Dendritic cell treated with granulocyte-macrophage colony-stimulating factor and Interleukin-4, amounts not matched to agents 40 ng/mL and 50 ng/mL, for 4 days (primary cell): ENCODE measurements at regions of chr7 and their contacts with region 1.

Region 1: DNA sequence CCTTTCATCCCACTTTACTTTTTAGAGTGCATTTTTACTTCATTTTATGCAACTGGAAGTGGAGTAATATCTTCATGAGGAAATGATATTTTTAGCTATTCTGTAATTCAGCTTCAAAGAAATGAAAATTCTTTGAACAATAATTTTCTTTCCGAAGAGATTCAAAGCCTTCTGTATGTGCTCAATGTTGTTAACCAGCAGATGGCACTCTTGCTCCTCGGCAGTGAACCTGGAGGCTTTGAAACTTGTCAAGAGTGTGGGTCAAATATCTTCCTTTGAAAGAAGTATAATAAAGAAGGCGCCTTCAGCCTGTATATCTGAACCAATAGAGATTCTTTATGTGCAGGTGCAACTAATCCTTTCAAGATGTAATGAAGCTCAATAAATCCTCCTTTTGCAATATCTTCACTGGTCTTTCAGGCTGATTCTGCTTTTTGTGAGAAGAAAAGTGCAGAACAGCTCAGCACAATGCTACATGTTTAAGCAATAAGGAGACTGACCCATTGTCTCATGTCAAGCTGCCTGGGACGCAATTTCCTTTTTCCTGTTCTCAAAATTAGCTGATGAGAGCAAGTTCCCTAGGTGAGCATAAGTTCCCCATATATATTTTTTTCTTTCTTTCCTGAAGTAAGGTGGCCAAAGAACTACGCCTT is 258.4 kb downstream of the SEMA3A start:
- H3K4me3 Mint-ChIP-seq: no peak overlapping the region
- H3K27ac Mint-ChIP-seq: no peak overlapping the region
- H3K4me1 Mint-ChIP-seq: peaks cover 18% of the 10 kb centered on the region
- H3K27me3 Mint-ChIP-seq: no peaks in the 10 kb centered on the region

Region 2: GRCh38 chr7:83861876-83862275 is 74.3 kb before region 1 on chr7:
- intact Hi-C with region 1: no loop called
- H3K4me3 Mint-ChIP-seq: no peak overlapping the region
- H3K27ac Mint-ChIP-seq: no peak overlapping the region
- H3K4me1 Mint-ChIP-seq: no peaks in the 10 kb centered on the region
- H3K27me3 Mint-ChIP-seq: no peaks in the 10 kb centered on the region

Region 3: DNA sequence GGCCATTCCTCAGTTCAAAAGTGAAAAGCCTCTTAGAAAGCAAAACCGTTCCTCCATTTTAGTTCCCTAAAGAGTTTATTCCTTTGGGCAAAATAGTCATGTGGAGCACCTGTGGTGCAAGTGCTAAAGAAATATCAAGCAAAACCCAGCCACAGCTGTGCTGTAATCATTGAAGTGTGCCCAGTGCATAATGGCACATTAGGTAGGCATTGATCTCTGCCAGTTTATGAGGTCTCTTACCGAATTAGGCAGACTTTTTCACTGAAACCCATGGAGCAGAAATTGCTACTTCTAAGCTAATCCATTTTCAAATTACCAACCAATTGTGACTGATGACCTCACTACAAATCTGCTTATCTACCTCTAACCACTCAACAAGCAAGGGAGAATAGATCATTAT is 355.6 kb after region 1 on chr7:
- intact Hi-C with region 1: no loop called
- H3K4me3 Mint-ChIP-seq: no peak overlapping the region
- H3K27ac Mint-ChIP-seq: no peak overlapping the region
- H3K4me1 Mint-ChIP-seq: no peaks in the 10 kb centered on the region
- H3K27me3 Mint-ChIP-seq: no peaks in the 10 kb centered on the region

Region 4: DNA sequence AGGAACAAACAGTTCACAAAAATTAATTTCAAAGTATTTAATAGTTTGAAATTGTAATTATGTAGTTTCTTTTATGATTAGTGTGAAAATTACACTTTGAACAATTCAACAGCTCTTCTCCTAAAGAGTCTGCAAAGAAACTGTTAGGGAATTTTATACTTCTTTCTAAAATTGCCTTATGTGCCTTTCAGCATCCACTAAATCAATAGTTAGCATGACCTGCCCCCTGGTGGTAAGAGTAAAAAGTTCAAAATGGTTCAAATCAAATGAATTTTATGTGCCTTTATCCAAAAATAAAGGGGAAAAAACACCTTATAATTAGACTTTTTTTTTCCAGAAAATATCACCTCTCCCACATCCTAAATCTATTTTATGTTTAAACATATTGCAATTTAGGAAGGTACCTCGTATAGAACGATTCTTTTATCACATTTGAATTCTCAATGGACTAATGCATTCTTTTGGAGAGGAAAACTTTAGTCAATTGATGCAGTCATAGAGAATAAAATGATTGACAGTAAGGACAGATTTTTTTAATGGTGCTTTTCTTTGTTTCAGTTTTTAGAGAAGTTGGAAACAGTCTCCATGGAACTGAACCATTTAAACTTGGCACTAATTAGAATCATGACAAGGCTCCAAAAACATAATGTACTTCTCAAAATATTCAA is 1087.0 kb after region 1 on chr7:
- intact Hi-C with region 1: loop called (anchors 1 kb)
- H3K4me3 Mint-ChIP-seq: no peak overlapping the region
- H3K27ac Mint-ChIP-seq: no peak overlapping the region
- H3K4me1 Mint-ChIP-seq: no peaks in the 10 kb centered on the region
- H3K27me3 Mint-ChIP-seq: no peaks in the 10 kb centered on the region